ENCODE measurements at regions of chr22 and their contacts with region 1.

Region 1: GRCh38 chr22:39117585-39118191 is 20.6 kb downstream of the APOBEC3H start:
- DNase-seq: peak; percentile 85
- H3K4me3 Mint-ChIP-seq: no peak overlapping the region
- H3K27ac Mint-ChIP-seq: peak overlapping the region; percentile 48
- H3K4me1 Mint-ChIP-seq: peaks cover 36% of the 10 kb centered on the region
- H3K27me3 Mint-ChIP-seq: no peaks in the 10 kb centered on the region

Region 2: DNA sequence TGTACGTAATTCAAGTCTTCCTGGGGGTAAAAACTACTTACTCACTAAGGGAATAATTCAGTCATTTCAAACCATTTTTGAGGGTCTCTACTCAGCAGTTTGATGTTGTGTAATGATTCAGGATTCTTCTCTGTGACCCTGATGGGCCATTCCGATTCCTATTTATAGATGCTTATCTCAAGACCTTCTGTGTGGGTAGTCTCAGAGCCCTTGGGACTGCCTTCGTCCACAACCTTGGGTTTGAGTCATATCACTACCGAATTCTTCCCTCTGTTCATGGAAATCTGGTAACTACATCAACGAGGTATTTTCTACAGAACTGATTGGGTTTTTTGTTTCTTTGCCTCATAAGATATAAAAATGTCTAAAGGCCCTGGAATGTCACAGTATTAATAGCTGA is 231.4 kb before region 1 on chr22:
- CTCF ChIA-PET with region 1: no interaction called
- intact Hi-C with region 1: no loop called
- DNase-seq: no peak
- H3K4me3 Mint-ChIP-seq: no peak overlapping the region
- H3K27ac Mint-ChIP-seq: no peak overlapping the region
- H3K4me1 Mint-ChIP-seq: peaks cover 26% of the 10 kb centered on the region
- H3K27me3 Mint-ChIP-seq: no peaks in the 10 kb centered on the region

Region 3: GRCh38 chr22:38973289-38974169 is 144.2 kb before region 1 on chr22:
- CTCF ChIA-PET with region 1: interaction called, 3 read pairs
- intact Hi-C with region 1: loop called (anchors 1 kb)
- DNase-seq: peak; percentile 77
- H3K4me3 Mint-ChIP-seq: no peak overlapping the region
- H3K27ac Mint-ChIP-seq: no peak overlapping the region
- H3K4me1 Mint-ChIP-seq: peaks cover 4% of the 10 kb centered on the region
- H3K27me3 Mint-ChIP-seq: peaks cover 2% of the 10 kb centered on the region

Region 4: DNA sequence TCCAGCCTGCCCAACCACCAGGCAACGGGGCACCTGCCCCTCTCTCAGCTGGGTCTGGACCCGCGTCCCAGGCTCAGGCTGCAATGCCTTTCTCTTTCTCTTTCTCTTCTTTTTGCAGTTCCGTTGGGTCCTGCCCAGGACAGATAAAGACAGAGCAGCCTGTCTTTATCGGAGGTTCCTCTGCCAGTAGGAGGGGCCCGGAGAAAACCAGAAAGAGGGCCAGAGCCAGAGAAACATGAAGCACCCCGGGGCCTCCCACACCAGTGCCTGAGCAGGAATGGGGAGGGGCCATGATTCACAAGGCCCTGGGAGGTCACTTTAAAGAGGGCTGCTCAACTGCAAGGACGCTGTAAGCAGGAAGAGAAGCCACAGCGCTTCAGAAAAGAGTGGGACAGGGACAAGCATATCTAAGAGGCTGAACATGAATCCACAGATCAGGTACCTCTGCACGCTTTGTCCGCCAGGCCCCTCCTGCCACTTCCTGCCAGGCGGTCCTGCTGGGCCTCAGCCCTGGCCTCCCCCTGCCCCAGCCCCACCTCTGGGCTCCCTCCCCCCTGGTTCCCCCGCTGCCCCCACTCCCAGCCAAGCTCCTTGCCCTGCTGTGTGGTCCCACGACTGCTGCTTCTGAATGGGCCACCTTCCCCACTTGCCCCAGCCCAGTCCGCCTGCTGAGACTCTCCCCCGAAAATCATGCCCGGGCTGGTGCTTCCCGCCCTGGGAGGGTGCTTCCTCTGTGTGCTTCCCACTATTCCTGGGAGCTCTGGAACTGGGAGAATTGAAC is 103.6 kb before region 1 on chr22 and contains the start of gene APOBEC3C:
- CTCF ChIA-PET with region 1: no interaction called
- intact Hi-C with region 1: loop called (anchors 1 kb)
- DNase-seq: peak; percentile 93
- H3K4me3 Mint-ChIP-seq: peak within 1 kb of the TSS; percentile 89
- H3K27ac Mint-ChIP-seq: peak within 1 kb of the TSS; percentile 95
- H3K4me1 Mint-ChIP-seq: peaks cover 34% of the 10 kb centered on the region
- H3K27me3 Mint-ChIP-seq: no peaks in the 10 kb centered on the region
- total RNA-seq, gene APOBEC3C: 71.5 to 74.1 TPM

Region 5: DNA sequence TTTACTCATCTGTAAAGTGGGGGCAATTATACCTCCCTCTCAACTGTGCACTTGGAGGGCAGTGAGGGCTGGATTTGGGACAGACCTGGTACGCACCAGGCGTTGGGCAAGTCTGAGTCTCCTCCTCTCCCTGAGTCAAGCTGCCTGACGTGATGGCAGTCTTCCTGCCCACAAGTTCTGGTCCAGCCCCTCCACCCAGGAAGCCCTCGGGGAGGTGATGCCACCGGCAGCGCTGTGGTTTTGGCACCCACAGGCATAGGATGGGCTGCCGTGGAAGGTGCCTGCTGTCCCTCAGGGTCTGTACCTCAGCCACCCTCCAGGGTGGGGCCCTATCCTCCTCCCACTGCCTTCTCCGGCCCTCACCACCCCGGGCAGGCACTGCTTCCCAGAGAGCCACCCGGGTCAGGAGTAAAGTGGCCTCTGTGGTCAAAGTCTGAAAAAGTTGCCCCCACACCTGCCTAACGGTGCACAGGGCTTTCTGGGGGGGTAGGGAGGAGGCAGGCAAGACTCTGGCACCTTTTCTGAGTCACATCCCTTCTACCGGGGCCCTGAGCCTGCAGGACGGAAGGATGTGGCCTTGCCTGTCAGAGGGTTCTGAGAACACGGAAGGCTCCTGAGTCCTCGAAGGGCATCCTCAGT is 27.1 kb before region 1 on chr22:
- CTCF ChIA-PET with region 1: interaction called, 4 read pairs
- intact Hi-C with region 1: loop called (anchors 1 kb)
- DNase-seq: peak; percentile 94
- H3K4me3 Mint-ChIP-seq: peak overlapping the region; percentile 54
- H3K27ac Mint-ChIP-seq: peak overlapping the region; percentile 91
- H3K4me1 Mint-ChIP-seq: peaks cover 72% of the 10 kb centered on the region
- H3K27me3 Mint-ChIP-seq: no peaks in the 10 kb centered on the region

Measured in activated naive CD4-positive, alpha-beta T cell treated with anti-CD3 and anti-CD28 coated beads for 36 hours (primary cell).